ENCODE measurements at regions of chr10 and their contacts with region 1.

Region 1: DNA sequence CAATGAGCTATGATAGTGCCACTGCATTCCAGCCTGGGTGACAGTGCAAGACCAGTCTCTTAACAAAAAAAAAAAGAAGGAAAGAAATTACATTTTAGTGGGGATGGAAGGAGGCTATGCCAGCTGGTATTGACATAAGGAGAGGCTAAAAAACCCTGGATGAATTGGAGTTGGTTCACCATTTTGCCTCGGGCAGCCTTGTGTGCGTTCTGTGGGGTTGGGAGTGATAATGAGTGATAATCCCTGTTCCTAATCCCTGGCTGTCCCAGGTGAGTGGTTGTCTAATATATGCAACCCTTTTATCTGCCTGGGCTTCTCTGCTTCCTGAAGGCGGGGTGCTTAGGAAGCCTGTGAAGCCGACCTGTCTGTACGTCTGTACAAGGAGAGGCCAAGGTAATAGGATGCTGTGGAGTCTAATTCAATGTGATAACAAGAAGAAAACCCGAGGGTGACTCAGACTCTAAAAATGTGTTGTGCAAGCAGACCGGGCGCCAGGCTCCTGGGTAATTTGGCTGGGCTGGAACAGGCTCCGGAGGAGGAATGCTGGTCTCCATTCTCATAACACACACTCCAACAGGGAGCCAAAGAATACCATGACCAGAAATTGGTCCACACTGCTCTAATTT is 43.5 kb downstream of the THNSL1 start:
- DNase-seq: peak; percentile 84 to 88
- H3K4me3 ChIP-seq: no peak overlapping the region; the same call in 1 of the 2 replicates
- H3K27ac ChIP-seq: peak overlapping the region; percentile 89
- H3K4me1 ChIP-seq: peaks cover 42% of the 10 kb centered on the region
- H3K27me3 ChIP-seq: no peaks in the 10 kb centered on the region
- CTCF ChIP-seq: no peak

Region 2: DNA sequence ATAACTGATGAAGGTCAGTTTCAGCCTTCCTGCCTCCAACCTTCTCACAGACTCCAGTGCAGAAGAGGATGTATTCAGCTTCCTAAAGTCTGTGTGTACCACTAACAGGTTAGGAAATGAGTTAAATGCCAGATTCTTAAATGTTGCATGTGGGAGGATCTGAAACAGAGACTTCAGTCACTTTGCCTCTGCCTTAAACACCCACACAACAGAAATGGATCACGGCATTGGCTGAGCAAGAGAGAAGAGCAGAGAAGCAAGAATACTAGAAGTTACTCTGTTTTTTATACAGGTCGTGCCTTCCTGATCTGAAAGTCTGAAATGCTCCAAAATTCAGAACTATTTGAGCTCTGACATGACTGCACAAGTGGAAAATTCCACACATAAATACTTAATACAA is 237.3 kb before region 1 on chr10:
- CTCF ChIA-PET with region 1: no interaction called
- POLR2A ChIA-PET with region 1: no interaction called
- intact Hi-C with region 1: loop called (anchors 5 kb)
- DNase-seq: no peak
- H3K4me3 ChIP-seq: no peak overlapping the region
- H3K27ac ChIP-seq: no peak overlapping the region
- H3K4me1 ChIP-seq: peaks cover 40% of the 10 kb centered on the region
- H3K27me3 ChIP-seq: no peaks in the 10 kb centered on the region
- CTCF ChIP-seq: no peak

Region 3: GRCh38 chr10:24894309-24894708 is 165.6 kb before region 1 on chr10:
- CTCF ChIA-PET with region 1: no interaction called
- POLR2A ChIA-PET with region 1: no interaction called
- intact Hi-C with region 1: loop called (anchors 10 kb)
- DNase-seq: peak in 1 of 2 experiments; percentile 67
- H3K4me3 ChIP-seq: no peak overlapping the region
- H3K27ac ChIP-seq: no peak overlapping the region
- H3K4me1 ChIP-seq: peaks cover 58% of the 10 kb centered on the region
- H3K27me3 ChIP-seq: no peaks in the 10 kb centered on the region
- CTCF ChIP-seq: no peak

Region 4: DNA sequence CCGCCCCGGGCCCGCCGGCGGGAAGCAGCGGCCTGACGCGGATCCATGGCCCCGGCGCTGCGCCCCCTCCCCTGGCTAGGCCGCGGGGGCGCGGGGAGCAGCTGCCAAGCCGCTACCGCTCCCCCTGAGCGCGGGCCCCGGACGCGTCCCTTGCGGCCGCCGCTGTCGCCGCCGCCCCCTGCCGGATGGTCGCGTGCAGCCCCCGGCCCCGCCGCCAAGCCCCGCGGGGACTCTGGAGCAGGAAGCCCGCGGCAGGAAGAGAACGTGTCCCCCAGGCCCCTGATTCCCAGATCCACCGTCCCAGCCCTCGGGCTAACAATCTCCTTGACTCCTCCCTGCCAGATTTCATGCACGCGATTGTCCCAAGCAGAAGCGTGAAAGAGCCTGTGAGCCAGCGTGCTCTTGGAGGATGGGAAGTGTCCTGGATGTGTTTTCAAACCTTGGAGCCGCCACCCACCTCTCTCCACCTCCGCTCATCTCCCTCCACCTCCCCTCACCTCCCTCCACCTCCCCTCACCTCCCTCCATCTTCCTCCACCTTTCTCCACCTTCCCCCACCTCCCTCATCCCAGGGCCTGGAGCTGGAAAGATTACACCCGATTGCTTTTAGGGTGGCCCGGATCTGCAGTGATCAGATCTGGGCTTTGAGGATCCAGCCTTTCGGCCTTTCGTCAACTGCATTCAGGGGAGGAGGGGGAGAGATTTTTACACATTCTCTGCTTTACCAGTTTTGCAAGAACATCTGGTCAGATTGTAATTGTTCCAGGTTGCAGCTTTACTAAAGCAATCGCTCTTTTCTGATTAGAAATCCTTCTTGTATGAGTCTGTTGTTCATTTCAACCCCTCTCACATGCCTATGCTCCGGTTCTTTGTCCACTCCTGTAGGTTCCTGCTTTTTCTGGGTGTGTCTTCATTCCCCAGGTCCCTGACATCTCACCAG is 106.9 kb before region 1 on chr10:
- CTCF ChIA-PET with region 1: no interaction called
- POLR2A ChIA-PET with region 1: no interaction called
- intact Hi-C with region 1: loop called (anchors 5 kb)
- DNase-seq: peak; percentile 39
- H3K4me3 ChIP-seq: peak overlapping the region; percentile 52
- H3K27ac ChIP-seq: 0 out of 2 replicates have a peak overlapping the region, but pooled peaks have one; percentile 20
- H3K4me1 ChIP-seq: peaks cover 26% of the 10 kb centered on the region
- H3K27me3 ChIP-seq: no peaks in the 10 kb centered on the region
- CTCF ChIP-seq: no peak; the same call in 1 of the 2 replicates

Region 5: GRCh38 chr10:25016376-25017154 is 43.3 kb before region 1 on chr10 and contains the start of gene THNSL1:
- CTCF ChIA-PET with region 1: no interaction called
- POLR2A ChIA-PET with region 1: interaction called, 10 read pairs
- intact Hi-C with region 1: loop called (anchors 1 kb)
- DNase-seq: peak; percentile 93 to 97
- H3K4me3 ChIP-seq: peak within 1 kb of the TSS; percentile 80
- H3K27ac ChIP-seq: peak within 1 kb of the TSS; percentile 92
- H3K4me1 ChIP-seq: peaks cover 15% of the 10 kb centered on the region; the same call in 1 of the 2 replicates
- H3K27me3 ChIP-seq: no peaks in the 10 kb centered on the region
- CTCF ChIP-seq: no peak
- total RNA-seq, gene THNSL1: 5.6 and 6.8 TPM in 2 replicates

Region 6: DNA sequence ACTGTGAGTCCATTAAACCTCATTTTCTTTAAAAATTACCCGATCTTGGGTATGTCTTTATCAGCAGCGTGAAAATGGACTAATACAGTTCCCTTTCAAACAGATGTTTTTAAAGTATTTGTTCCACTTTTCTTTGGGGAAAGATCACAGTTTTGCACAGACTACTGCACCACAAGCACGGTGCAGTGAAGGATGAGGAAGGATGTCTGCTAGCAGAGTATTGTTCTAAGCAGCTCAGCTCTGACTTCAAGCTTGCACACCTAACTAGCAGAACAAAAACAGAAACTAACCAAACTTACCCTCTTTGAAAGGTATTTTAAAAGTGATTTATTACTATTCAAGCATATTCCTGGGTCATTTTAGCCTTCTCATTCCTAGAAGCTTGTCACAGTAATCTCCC is 23.5 kb before region 1 on chr10:
- CTCF ChIA-PET with region 1: interaction called, 14 read pairs
- POLR2A ChIA-PET with region 1: no interaction called
- intact Hi-C with region 1: no loop called
- DNase-seq: no peak
- H3K4me3 ChIP-seq: no peak overlapping the region
- H3K27ac ChIP-seq: no peak overlapping the region
- H3K4me1 ChIP-seq: no peaks in the 10 kb centered on the region
- H3K27me3 ChIP-seq: no peaks in the 10 kb centered on the region
- CTCF ChIP-seq: no peak

Measured in PC-9 (cell line).